Dorsolateral prefrontal cortex (tissue), 120 donors: ENCODE measurements at regions of chr2 and their contacts with region 1.

Region 1: GRCh38 chr2:133568172-133568571 is at the start of gene NCKAP5:
- DNase-seq: peak in 5 of 10 donors; percentile 7 to 66 (median 50)
- H3K4me3 ChIP-seq: peak within 1 kb of the TSS; percentile 7 to 72 (median 46)
- H3K27ac ChIP-seq: peak within 1 kb of the TSS in 35 of 59 donors; percentile 1 to 60 (median 34)
- H3K27me3 ChIP-seq: peaks cover 0 to 10% (median 0%) of the 10 kb centered on the region in 45 donors
- CTCF ChIP-seq: peak in 7 of 56 donors; percentile 4 to 33 (median 17)
- total RNA-seq, gene NCKAP5: 4.8 to 63.8 (median 20.6) TPM

Region 2: DNA sequence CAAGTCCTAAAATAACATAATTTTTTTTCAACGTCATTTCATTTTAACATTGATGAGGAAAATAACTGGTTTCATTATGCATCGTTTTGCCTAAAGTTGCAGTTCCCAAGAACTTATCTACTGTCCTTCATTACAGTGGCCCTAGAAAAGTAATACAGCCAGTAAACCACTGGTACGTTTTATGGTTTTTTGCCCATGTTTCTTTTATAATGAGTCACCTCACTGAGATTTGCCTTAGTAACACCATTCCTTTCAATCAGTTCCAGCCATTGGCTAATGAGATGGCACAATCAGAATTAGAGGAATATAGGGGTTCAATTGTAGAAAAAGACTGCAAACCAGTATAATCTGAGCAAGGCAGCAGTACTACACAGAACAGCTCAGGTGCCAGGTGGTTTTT is 475.6 kb before region 1 on chr2:
- intact Hi-C with region 1: no loop called
- DNase-seq: no peak
- H3K4me3 ChIP-seq: no peak overlapping the region
- H3K27ac ChIP-seq: no peak overlapping the region
- H3K27me3 ChIP-seq: no peaks in the 10 kb centered on the region
- CTCF ChIP-seq: no peak

Region 3: DNA sequence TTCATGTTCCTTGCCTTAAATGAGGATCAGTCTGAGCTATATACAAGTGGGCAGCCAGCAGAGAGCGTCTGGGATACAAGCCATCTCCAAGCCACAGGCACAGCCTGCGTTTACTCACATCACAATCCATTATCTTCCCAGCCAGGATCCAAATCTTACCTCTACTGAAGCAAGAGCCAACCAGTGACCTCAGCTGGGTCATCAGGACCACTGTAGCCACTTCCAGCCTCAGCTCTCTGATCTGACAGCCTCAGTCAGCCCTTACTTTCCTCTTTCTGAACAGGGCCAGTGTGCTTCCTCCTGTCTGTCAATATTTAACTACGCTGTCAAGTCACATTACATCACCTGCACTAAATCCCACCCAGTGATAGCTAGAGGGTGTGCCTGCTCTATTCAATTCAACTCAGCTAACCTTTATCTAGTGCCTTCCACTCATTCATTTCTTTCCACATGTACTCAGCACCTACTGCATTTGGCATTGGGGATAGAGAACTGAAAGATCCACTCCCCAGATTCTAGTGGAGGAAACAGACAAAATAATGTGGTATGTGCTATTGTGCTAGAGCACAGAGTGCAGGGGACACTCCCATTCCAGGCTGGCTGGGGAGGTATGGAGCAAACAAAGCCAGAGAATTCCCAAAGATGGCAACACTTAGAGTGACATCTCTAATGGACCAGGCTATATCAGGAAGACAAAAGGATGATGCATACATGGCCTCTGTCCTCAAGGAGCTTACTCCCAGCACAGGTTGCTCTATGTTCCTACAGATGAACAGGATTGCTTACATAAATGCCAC is 146.5 kb before region 1 on chr2:
- intact Hi-C with region 1: no loop called
- DNase-seq: peak in 4 of 10 donors; percentile 14 to 45 (median 34)
- H3K4me3 ChIP-seq: no peak overlapping the region
- H3K27ac ChIP-seq: no peak overlapping the region
- H3K27me3 ChIP-seq: no peaks in the 10 kb centered on the region
- CTCF ChIP-seq: peak in 4 of 56 donors; percentile 7 to 27 (median 11)

Region 4: GRCh38 chr2:133589456-133589855 is 21.3 kb after region 1 on chr2:
- intact Hi-C with region 1: loop called in 1 of 2 experiments (anchors 2 kb)
- DNase-seq: no peak
- H3K4me3 ChIP-seq: no peak overlapping the region
- H3K27ac ChIP-seq: no peak overlapping the region
- H3K27me3 ChIP-seq: peaks cover 0 to 4% (median 0%) of the 10 kb centered on the region in 45 donors
- CTCF ChIP-seq: no peak

Region 5: DNA sequence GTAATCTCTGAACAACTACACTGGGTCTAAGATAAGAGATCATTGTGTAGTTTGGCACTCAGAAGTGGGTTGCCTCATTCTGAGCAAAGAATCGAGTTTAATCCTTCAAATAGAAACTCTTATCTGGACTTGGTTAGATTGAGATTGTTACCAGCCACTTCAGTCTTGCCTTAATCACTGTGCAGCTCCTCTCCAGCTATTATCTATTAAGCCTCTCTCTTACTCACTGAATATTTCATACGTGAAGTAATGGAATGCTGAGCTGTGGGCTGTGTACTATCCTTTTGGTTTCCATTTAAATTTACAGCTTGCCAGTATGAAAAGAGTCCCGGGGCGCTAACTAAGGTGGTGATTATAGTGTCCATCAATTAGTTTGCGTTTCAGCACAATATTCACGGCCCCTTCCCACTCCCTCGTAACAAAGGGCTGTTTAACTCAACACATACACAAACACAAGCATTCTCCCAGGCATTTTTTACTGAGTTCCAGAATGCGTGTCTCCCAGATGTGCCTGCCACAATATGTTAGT is 65.8 kb after region 1 on chr2:
- intact Hi-C with region 1: loop called in 1 of 2 experiments (anchors 5 kb)
- DNase-seq: no peak
- H3K4me3 ChIP-seq: peak overlapping the region in 45 of 59 donors; percentile 1 to 56 (median 25)
- H3K27ac ChIP-seq: peak overlapping the region in 27 of 59 donors; percentile 1 to 59 (median 40)
- H3K27me3 ChIP-seq: no peaks in the 10 kb centered on the region
- CTCF ChIP-seq: no peak

Region 6: GRCh38 chr2:133674433-133675331 is 106.5 kb after region 1 on chr2:
- intact Hi-C with region 1: loop called in 1 of 2 experiments (anchors 5 kb)
- DNase-seq: peak; percentile 20 to 87 (median 76)
- H3K4me3 ChIP-seq: peak overlapping the region; percentile 12 to 68 (median 52)
- H3K27ac ChIP-seq: peak overlapping the region; percentile 67 to 94 (median 88)
- H3K27me3 ChIP-seq: no peaks in the 10 kb centered on the region
- CTCF ChIP-seq: peak in 2 of 56 donors; percentile 18